PC-9 (cell line): ENCODE measurements at regions of chr22 and their contacts with region 1.

Region 1: GRCh38 chr22:40177738-40178416 is at the start of gene TNRC6B:
- DNase-seq: peak; percentile 64 to 96
- H3K4me3 ChIP-seq: peak within 1 kb of the TSS; percentile 91
- H3K27ac ChIP-seq: peak within 1 kb of the TSS; percentile 69
- H3K4me1 ChIP-seq: peaks cover 32% of the 10 kb centered on the region
- H3K27me3 ChIP-seq: no peaks in the 10 kb centered on the region
- CTCF ChIP-seq: no peak
- total RNA-seq, gene TNRC6B: 57.8 and 62.7 TPM in 2 replicates

Region 2: GRCh38 chr22:39332441-39333064 is 845.3 kb before region 1 on chr22:
- CTCF ChIA-PET with region 1: no interaction called
- POLR2A ChIA-PET with region 1: interaction called, 11 read pairs
- intact Hi-C with region 1: no loop called
- DNase-seq: no peak
- H3K4me3 ChIP-seq: no peak overlapping the region
- H3K27ac ChIP-seq: no peak overlapping the region
- H3K4me1 ChIP-seq: no peaks in the 10 kb centered on the region
- H3K27me3 ChIP-seq: no peaks in the 10 kb centered on the region
- CTCF ChIP-seq: no peak

Region 3: GRCh38 chr22:39997939-39998338 is 179.9 kb before region 1 on chr22:
- CTCF ChIA-PET with region 1: no interaction called
- POLR2A ChIA-PET with region 1: no interaction called
- intact Hi-C with region 1: no loop called
- DNase-seq: peak; percentile 68 to 74
- H3K4me3 ChIP-seq: no peak overlapping the region
- H3K27ac ChIP-seq: no peak overlapping the region
- H3K4me1 ChIP-seq: peaks cover 47% of the 10 kb centered on the region
- H3K27me3 ChIP-seq: peaks cover 14% of the 10 kb centered on the region; the same call in 1 of the 2 replicates
- CTCF ChIP-seq: no peak

Region 4: GRCh38 chr22:40044102-40044869 is 133.6 kb before region 1 on chr22:
- CTCF ChIA-PET with region 1: interaction called, 3 read pairs
- POLR2A ChIA-PET with region 1: interaction called, 10 read pairs
- intact Hi-C with region 1: loop called (anchors 1 kb)
- DNase-seq: peak; percentile 99
- H3K4me3 ChIP-seq: peak overlapping the region; percentile 65
- H3K27ac ChIP-seq: peak overlapping the region; percentile 46
- H3K4me1 ChIP-seq: peaks cover 29% of the 10 kb centered on the region
- H3K27me3 ChIP-seq: no peaks in the 10 kb centered on the region; the same call in 1 of the 2 replicates
- CTCF ChIP-seq: no peak

Region 5: DNA sequence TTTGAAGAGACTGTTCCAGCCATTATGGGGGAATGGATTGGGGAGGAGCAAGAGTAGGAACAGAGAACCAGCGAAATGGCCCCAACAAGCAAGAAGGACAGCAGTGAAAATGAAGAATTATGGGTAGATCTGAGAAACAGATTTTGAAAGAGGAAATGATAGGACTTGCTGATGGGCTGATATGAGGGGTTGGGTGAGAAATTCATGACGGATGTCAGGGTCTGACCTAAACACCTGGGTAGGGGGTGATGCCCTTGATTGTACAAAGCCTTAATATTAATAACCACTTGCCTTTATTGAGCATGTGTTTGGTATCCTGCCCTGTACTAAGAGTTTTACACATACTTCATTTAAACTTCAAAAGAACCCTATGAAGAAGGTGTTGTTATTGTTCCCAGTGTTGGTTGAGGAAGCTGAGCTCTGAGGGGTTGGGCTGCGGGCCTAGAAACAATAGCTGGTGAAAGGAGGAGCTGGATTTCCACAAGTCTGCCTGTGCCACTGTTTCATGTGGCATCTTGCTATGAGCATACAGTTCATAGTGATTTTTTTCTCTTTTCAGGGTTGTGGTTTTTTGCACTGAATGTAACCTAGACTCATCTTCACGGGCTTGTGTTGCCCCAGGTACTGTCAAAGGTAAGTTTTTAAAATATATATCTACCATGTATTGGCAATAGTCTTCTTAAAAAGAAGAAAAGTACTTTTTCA is 61.2 kb before region 1 on chr22:
- CTCF ChIA-PET with region 1: no interaction called
- POLR2A ChIA-PET with region 1: no interaction called
- intact Hi-C with region 1: no loop called
- DNase-seq: no peak
- H3K4me3 ChIP-seq: no peak overlapping the region
- H3K27ac ChIP-seq: no peak overlapping the region
- H3K4me1 ChIP-seq: no peaks in the 10 kb centered on the region
- H3K27me3 ChIP-seq: no peaks in the 10 kb centered on the region
- CTCF ChIP-seq: no peak

Region 6: DNA sequence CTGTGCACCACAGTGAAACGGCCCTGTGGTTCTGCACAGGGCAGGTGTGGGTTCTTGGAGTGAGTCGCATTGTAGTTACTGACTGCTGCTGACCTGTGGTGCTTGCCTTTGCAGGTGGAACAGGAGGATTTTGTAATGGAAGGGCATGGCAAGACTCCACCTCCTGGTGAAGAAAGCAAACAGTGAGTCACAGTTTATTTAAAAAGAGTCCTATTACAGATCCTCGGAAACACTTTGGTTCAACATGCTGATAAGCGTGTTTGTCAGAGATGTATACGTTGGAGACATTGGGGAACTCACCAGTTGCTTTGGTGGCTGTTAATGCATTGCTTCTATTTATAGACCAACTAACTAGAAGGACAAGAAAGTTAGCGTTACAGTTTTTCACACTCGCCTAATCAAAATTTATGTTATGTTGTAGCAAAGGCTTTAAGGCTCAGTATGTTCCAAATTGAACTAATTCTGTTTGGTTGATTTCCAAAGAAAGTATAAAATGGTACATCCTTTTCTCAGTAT is 21.8 kb before region 1 on chr22:
- CTCF ChIA-PET with region 1: no interaction called
- POLR2A ChIA-PET with region 1: interaction called, 4 read pairs
- intact Hi-C with region 1: loop called (anchors 1 kb)
- DNase-seq: peak; percentile 68 to 98
- H3K4me3 ChIP-seq: peak overlapping the region; percentile 0; the same call in 1 of the 2 replicates
- H3K27ac ChIP-seq: peak overlapping the region; percentile 36
- H3K4me1 ChIP-seq: peaks cover 26% of the 10 kb centered on the region
- H3K27me3 ChIP-seq: no peaks in the 10 kb centered on the region
- CTCF ChIP-seq: peak; percentile 54; the same call in 1 of the 2 replicates

Region 7: DNA sequence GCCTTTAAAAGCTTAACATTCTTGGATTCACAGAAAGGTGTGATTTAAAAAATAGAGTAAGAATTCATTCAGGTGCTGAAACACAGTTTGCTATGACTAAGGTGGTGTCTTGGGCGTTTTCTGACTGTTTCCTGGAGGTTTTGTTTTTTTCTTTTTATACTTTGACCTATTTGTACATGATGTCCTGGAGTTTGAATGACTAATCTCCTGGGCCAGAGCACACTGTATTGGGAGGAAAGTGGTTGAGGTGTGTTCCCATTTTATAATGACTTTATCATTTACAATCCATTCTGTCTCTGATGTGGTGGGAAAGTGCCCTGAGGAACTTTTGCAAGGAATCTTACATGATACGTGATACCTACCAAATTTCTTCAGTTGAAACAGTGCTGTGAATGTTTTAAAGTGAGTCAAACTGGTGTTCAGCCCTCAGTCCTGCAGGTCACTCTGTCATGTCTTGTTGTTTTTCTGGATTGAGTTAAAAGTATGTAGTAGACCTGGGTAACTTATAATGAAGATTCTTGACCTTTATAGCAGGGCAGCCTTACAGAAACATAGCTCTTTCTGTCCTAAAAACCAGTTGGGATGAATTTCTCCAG is 80.7 kb after region 1 on chr22:
- CTCF ChIA-PET with region 1: no interaction called
- POLR2A ChIA-PET with region 1: interaction called, 5 read pairs
- intact Hi-C with region 1: loop called (anchors 5 kb)
- DNase-seq: peak; percentile 50 to 99
- H3K4me3 ChIP-seq: peak overlapping the region; percentile 17; the same call in 1 of the 2 replicates
- H3K27ac ChIP-seq: peak overlapping the region; percentile 91
- H3K4me1 ChIP-seq: peaks cover 38% of the 10 kb centered on the region
- H3K27me3 ChIP-seq: no peaks in the 10 kb centered on the region
- CTCF ChIP-seq: no peak

Region 8: DNA sequence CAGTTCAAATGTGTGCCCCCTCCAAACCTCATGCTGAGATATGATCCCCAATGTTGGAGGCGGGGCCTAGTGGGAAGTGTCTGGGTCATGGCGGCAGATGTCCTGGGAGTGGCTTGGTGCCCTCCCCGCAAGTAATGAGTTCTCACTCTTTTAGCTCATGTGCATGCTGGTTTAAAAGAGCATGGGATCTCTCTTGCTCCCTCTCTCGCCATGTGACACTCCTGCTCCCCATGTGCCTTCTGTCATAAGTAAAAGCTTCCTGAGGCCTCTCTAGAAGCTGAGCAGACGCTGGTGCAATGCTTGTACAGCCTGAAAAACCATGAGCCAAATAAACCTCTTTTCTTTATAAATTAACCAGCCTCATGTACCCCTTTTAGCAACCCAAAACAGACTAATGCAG is 291.3 kb after region 1 on chr22:
- CTCF ChIA-PET with region 1: no interaction called
- POLR2A ChIA-PET with region 1: no interaction called
- intact Hi-C with region 1: no loop called
- DNase-seq: no peak
- H3K4me3 ChIP-seq: no peak overlapping the region
- H3K27ac ChIP-seq: no peak overlapping the region
- H3K4me1 ChIP-seq: no peaks in the 10 kb centered on the region
- H3K27me3 ChIP-seq: no peaks in the 10 kb centered on the region
- CTCF ChIP-seq: no peak

Region 9: GRCh38 chr22:40782518-40782917 is 604.6 kb after region 1 on chr22:
- CTCF ChIA-PET with region 1: no interaction called
- POLR2A ChIA-PET with region 1: interaction called, 28 read pairs
- intact Hi-C with region 1: no loop called
- DNase-seq: peak; percentile 23 to 89
- H3K4me3 ChIP-seq: no peak overlapping the region; the same call in 1 of the 2 replicates
- H3K27ac ChIP-seq: peak overlapping the region; percentile 63
- H3K4me1 ChIP-seq: peaks cover 37% of the 10 kb centered on the region
- H3K27me3 ChIP-seq: no peaks in the 10 kb centered on the region
- CTCF ChIP-seq: no peak